Calu3 (cell line): ENCODE measurements at regions of chr6 and their contacts with region 1.

Region 1: GRCh38 chr6:88492824-88493223 is 326.7 kb upstream of the CNR1 start:
- DNase-seq: peak; percentile 9
- H3K4me3 Mint-ChIP-seq: no peak overlapping the region
- H3K27ac Mint-ChIP-seq: no peak overlapping the region
- H3K4me1 Mint-ChIP-seq: no peaks in the 10 kb centered on the region
- H3K27me3 Mint-ChIP-seq: no peaks in the 10 kb centered on the region
- CTCF ChIP-seq: peak; percentile 26

Region 2: GRCh38 chr6:88512951-88513350 is 20.1 kb after region 1 on chr6:
- CTCF ChIA-PET with region 1: no interaction called
- intact Hi-C with region 1: no loop called
- DNase-seq: no peak
- H3K4me3 Mint-ChIP-seq: no peak overlapping the region
- H3K27ac Mint-ChIP-seq: no peak overlapping the region
- H3K4me1 Mint-ChIP-seq: no peaks in the 10 kb centered on the region
- H3K27me3 Mint-ChIP-seq: no peaks in the 10 kb centered on the region
- CTCF ChIP-seq: no peak

Region 3: GRCh38 chr6:88780714-88781389 is 288.0 kb after region 1 on chr6:
- CTCF ChIA-PET with region 1: no interaction called
- intact Hi-C with region 1: loop called (anchors 5 kb)
- DNase-seq: peak; percentile 58
- H3K4me3 Mint-ChIP-seq: no peak overlapping the region
- H3K27ac Mint-ChIP-seq: no peak overlapping the region
- H3K4me1 Mint-ChIP-seq: no peaks in the 10 kb centered on the region
- H3K27me3 Mint-ChIP-seq: no peaks in the 10 kb centered on the region
- CTCF ChIP-seq: peak; percentile 63

Region 4: GRCh38 chr6:88870717-88871330 is 378.0 kb after region 1 on chr6:
- CTCF ChIA-PET with region 1: no interaction called
- intact Hi-C with region 1: loop called (anchors 2 kb)
- DNase-seq: peak; percentile 56
- H3K4me3 Mint-ChIP-seq: no peak overlapping the region
- H3K27ac Mint-ChIP-seq: no peak overlapping the region
- H3K4me1 Mint-ChIP-seq: peaks cover 14% of the 10 kb centered on the region
- H3K27me3 Mint-ChIP-seq: no peaks in the 10 kb centered on the region
- CTCF ChIP-seq: no peak